B cell (primary cell): ENCODE measurements at regions of chr4 and their contacts with region 1.

Region 1: DNA sequence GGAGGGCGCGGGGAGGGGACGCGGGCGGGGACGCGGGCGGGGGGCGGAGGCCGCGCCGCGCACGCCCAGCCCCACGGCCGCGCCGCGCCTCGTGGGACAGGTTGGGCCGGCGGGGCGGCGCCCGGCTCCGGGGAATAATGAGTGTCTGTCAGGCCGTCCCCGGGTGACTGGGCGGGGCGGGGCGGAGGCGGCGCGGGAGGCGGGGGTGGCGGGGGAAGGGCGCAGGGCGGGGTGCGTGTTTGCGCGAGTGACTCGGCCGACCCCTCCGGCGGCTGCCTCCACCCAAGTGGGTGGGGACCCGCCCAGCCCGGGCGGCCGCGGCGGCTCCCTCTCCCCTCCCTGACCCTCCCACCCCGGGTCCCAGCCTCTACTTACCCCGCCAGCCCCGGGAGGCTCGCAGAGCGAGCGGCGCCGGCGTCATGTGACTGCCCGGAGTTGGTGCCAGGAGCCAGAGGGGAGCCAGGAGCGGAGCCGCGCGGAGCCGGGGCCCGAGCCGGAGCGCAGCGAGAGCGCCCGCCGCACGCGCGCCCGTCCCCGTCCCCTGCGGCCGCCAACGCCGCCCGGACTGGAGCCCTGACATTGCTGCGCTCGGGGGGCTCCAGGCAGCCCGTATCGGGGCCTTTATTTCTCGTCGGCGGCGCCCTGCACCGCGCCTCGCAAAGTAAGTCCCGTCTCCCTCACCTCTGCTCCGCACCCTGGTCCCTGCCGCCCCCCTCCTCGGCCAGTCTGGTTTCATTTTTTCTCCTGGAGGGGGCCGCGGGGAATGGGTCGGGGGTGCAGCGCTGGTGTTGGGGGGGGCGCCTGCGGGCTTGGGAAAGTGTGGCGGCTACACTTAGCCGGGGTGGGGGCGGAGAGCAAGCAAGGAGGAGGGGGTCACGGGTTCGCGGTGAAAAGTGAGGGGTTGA is at the start of gene KLF3:
- DNase-seq: no peak
- ATAC-seq: peak; percentile 79
- H3K4me3 ChIP-seq: peak within 1 kb of the TSS; percentile 80 to 94 (median 83)
- H3K4me3 Mint-ChIP-seq: peak within 1 kb of the TSS; percentile 97
- H3K27ac ChIP-seq: peak within 1 kb of the TSS; percentile 90 to 92
- H3K27ac Mint-ChIP-seq: peak within 1 kb of the TSS; percentile 96
- H3K4me1 ChIP-seq: peaks cover 55 to 61% of the 10 kb centered on the region in 2 donors
- H3K4me1 Mint-ChIP-seq: peaks cover 62% of the 10 kb centered on the region
- H3K27me3 ChIP-seq: no peaks in the 10 kb centered on the region
- H3K27me3 Mint-ChIP-seq: no peaks in the 10 kb centered on the region
- CTCF ChIP-seq: no peak
- total RNA-seq, gene KLF3: 51.9 and 52.8 TPM in 2 replicates

Region 2: DNA sequence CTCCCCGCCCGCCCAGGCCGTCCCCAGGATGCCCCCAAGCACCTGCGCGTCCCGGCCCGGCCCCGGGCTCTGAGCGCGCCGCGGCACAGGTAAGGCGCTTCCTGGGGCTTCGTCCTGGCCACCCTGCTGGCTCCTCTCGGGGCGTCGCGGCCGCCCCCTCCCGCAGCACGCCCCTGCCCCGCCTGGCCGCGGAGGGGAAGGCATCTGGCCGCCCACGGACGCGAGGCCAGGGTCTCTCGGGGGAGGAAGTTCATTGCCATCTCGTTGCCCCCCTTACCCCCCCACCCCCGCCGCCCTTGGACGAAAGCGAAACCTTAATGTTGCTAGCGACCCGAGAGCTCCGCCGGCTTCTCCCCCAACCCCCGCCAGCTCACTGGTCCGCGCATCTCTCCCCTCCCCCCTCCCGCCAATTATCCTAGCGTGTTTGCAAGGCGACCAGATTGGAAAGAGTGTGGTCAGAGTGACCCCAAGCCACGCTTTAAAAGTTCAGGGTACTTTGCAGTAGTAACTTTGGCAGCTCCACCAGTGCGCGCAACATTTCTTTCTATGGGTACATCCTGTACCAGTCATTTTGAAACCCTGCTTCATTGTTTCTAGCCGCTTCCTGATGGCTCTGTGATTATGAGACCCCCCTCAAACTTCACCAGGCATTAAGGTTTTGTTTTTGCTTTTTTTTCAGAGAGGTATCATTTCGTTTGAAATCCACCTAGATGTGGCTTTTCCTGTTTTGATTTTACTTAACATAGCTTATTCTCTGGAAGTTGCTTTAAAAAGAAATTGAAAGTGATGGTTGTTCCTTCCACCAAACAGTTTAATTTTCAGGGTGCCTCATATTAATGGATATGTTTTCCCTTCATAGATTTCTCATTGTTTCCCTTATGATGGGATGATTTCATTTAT is 772.5 kb before region 1 on chr4:
- CTCF ChIA-PET with region 1: no interaction called
- POLR2A ChIA-PET with region 1: no interaction called
- intact Hi-C with region 1: loop called (anchors 5 kb)
- DNase-seq: peak; percentile 85
- ATAC-seq: peak; percentile 52
- H3K4me3 ChIP-seq: peak overlapping the region; percentile 72 to 96 (median 72)
- H3K4me3 Mint-ChIP-seq: peak overlapping the region; percentile 91
- H3K27ac ChIP-seq: peak overlapping the region; percentile 92 to 95
- H3K27ac Mint-ChIP-seq: peak overlapping the region; percentile 98
- H3K4me1 ChIP-seq: peaks cover 49 to 50% of the 10 kb centered on the region in 2 donors
- H3K4me1 Mint-ChIP-seq: peaks cover 62% of the 10 kb centered on the region
- H3K27me3 ChIP-seq: no peaks in the 10 kb centered on the region
- H3K27me3 Mint-ChIP-seq: no peaks in the 10 kb centered on the region
- CTCF ChIP-seq: no peak

Region 3: DNA sequence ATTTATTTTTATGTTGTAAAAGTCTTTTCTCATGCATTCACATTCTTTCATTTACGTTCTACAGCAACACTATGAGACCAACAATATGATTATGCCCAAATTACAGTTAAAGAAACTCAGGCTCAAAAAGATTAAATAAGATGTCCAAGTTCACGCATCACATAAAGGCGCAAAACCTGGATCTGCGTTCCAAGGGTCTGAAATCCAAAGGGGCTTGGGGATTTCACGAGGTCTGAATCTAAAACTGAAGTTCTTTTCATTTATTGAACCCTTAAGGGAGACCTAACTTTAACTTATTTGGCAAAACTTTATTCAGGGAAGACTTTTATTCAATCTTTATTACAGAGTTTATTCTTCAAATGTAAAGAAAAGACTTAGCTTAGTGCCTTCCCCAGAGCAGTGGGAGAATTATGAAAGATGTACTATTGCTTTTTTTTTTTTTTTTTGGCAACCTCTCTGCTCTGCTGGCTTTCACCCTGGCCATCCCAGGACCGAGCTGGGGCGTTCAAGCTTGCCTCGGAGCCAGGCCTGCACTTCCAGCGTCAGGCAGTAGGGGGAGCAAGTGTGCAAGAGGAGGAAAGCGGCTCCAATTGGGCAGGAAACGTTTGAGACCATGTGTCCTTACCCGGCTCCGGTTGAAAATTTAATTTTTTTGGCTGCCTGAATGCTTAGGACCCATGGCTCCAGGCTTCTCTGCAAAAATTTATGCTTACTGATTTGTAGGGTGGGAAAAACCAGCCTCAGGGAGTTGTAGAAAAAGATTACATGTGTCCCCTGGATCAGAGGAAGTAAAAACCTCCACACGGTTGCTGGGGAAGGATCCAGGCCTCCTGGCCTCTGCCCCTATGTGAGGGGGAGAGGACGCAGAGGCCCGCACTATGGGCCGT is 344.4 kb before region 1 on chr4:
- CTCF ChIA-PET with region 1: interaction called, 8 read pairs
- POLR2A ChIA-PET with region 1: interaction called, 3 read pairs
- intact Hi-C with region 1: loop called (anchors 1 kb)
- DNase-seq: peak; percentile 85
- ATAC-seq: peak; percentile 81
- H3K4me3 ChIP-seq: peak overlapping the region; percentile 43 to 74 (median 54)
- H3K4me3 Mint-ChIP-seq: peak overlapping the region; percentile 83
- H3K27ac ChIP-seq: peak overlapping the region; percentile 82 to 87
- H3K27ac Mint-ChIP-seq: peak overlapping the region; percentile 86
- H3K4me1 ChIP-seq: peaks cover 16 to 21% of the 10 kb centered on the region in 2 donors
- H3K4me1 Mint-ChIP-seq: peaks cover 29% of the 10 kb centered on the region
- H3K27me3 ChIP-seq: no peaks in the 10 kb centered on the region
- H3K27me3 Mint-ChIP-seq: no peaks in the 10 kb centered on the region
- CTCF ChIP-seq: peak; percentile 93

Region 4: GRCh38 chr4:38675146-38676121 is 11.4 kb after region 1 on chr4:
- CTCF ChIA-PET with region 1: interaction called, 24 read pairs
- POLR2A ChIA-PET with region 1: interaction called, 4 read pairs
- intact Hi-C with region 1: loop called (anchors 1 kb)
- DNase-seq: peak; percentile 87
- ATAC-seq: peak; percentile 73
- H3K4me3 ChIP-seq: no peak overlapping the region
- H3K4me3 Mint-ChIP-seq: peak overlapping the region; percentile 33
- H3K27ac ChIP-seq: peak overlapping the region in 1 of 2 donors; percentile 73
- H3K27ac Mint-ChIP-seq: peak overlapping the region; percentile 59
- H3K4me1 ChIP-seq: peaks cover 55 to 59% of the 10 kb centered on the region in 2 donors
- H3K4me1 Mint-ChIP-seq: peaks cover 78% of the 10 kb centered on the region
- H3K27me3 ChIP-seq: no peaks in the 10 kb centered on the region
- H3K27me3 Mint-ChIP-seq: no peaks in the 10 kb centered on the region
- CTCF ChIP-seq: peak; percentile 93

Region 5: GRCh38 chr4:38804654-38805295 is 140.7 kb after region 1 on chr4 and contains the start of gene TLR1:
- CTCF ChIA-PET with region 1: interaction called, 3 read pairs
- POLR2A ChIA-PET with region 1: no interaction called
- intact Hi-C with region 1: loop called (anchors 5 kb)
- DNase-seq: peak; percentile 85
- ATAC-seq: peak; percentile 52
- H3K4me3 ChIP-seq: peak within 1 kb of the TSS; percentile 57 to 97 (median 70)
- H3K4me3 Mint-ChIP-seq: peak within 1 kb of the TSS; percentile 80
- H3K27ac ChIP-seq: peak within 1 kb of the TSS; percentile 72 to 97
- H3K27ac Mint-ChIP-seq: peak within 1 kb of the TSS; percentile 95
- H3K4me1 ChIP-seq: peaks cover 32 to 45% of the 10 kb centered on the region in 2 donors
- H3K4me1 Mint-ChIP-seq: peaks cover 56% of the 10 kb centered on the region
- H3K27me3 ChIP-seq: no peaks in the 10 kb centered on the region
- H3K27me3 Mint-ChIP-seq: no peaks in the 10 kb centered on the region
- CTCF ChIP-seq: peak; percentile 75
- total RNA-seq, gene TLR1: 50.8 and 54.1 TPM in 2 replicates

Region 6: DNA sequence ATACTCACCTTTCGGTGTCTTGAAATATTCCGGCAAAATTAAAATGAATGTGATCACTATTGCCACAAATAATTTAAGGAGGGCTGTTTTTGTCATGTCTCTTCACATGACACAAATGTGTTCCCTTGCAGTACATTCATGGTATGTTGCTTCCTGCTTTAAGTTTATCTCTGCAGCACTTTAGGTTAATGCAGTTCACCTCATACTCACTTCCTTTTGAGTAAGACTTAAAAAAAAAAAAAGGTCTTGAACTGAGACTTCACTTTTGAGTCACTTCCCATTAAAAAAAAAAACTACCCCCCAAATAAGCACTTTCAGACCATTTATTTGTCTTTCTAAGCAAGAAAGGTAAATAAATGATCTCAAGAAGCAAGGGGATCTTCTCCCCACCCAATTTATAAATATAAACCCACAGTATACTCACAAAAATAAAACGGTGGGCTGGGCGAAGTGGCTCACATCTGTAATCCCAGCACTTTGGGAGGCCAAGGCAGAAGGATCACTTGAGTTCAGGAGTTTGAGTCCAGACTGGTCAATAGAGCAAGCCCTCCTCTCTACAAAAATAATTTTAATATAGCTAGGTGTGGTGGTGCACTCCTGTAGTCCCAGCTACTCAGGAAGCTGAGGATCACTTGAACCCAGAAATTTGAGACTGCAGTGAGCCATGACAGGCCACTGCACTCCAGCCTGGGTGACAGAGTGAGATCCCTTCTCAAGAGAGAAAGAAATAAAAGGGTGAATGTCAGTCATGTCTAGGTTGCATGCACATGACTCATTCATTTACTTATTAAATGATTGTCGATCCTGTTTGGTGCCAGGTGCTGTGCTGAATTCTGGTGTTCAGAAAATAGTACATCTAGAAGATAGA is 368.4 kb after region 1 on chr4 and contains the start of gene TMEM156:
- CTCF ChIA-PET with region 1: no interaction called
- POLR2A ChIA-PET with region 1: no interaction called
- intact Hi-C with region 1: loop called (anchors 5 kb)
- DNase-seq: peak; percentile 78
- ATAC-seq: peak; percentile 68
- H3K4me3 ChIP-seq: peak within 1 kb of the TSS; percentile 63 to 98 (median 69)
- H3K4me3 Mint-ChIP-seq: peak within 1 kb of the TSS; percentile 85
- H3K27ac ChIP-seq: peak within 1 kb of the TSS; percentile 72 to 84
- H3K27ac Mint-ChIP-seq: peak within 1 kb of the TSS; percentile 87
- H3K4me1 ChIP-seq: peaks cover 27 to 36% of the 10 kb centered on the region in 2 donors
- H3K4me1 Mint-ChIP-seq: peaks cover 54% of the 10 kb centered on the region
- H3K27me3 ChIP-seq: no peaks in the 10 kb centered on the region
- H3K27me3 Mint-ChIP-seq: no peaks in the 10 kb centered on the region
- CTCF ChIP-seq: no peak
- total RNA-seq, gene TMEM156: 59.9 and 61.4 TPM in 2 replicates